ENCODE measurements at regions of chr9 and their contacts with region 1.

Region 1: GRCh38 chr9:93453047-93453914 is at the start of gene FAM120AOS:
- DNase-seq: peak; percentile 88
- CTCF ChIP-seq: no peak

Region 2: DNA sequence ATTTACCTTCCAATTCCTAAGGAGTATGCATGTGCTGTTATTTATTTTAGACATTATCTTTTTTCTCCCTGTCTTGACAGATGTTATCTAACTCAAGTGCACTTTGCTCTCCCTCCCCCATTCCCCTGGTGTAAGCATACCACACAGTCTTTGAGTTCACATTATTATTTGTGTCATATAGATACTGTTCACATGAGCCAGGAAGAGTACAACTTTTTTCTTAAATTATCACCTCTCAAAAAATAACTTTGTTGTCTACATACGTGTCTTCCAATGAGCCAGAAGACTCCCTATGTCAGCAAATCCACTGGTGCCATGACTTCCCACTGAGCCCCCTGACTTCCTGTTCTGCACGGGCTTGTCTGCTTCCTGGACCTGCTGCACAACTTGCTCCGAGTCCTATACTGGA is 21.7 kb before region 1 on chr9:
- CTCF ChIA-PET with region 1: no interaction called
- POLR2A ChIA-PET with region 1: no interaction called
- DNase-seq: no peak
- CTCF ChIP-seq: no peak

Region 3: DNA sequence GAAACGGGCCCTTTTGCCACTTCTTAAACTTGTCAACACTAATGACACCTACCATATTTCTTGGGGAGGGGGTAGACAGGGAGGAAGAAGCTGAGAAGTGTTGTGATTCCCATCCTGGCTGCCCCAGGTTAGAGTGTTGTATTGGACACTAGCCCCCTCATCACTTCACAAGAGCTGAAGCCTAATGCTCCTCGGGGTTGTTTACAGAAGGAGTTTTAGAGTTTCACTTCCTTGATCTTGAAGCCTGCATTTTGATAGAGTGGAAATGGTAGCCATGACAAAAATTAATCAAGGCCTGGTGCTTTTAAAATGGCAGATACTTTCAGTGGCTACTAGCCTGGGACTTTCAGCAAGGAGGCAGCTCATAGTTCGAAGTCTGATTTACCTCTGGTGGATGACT is 11.1 kb after region 1 on chr9:
- CTCF ChIA-PET with region 1: interaction called, 13 read pairs
- POLR2A ChIA-PET with region 1: interaction called, 4 read pairs
- DNase-seq: peak; percentile 23
- CTCF ChIP-seq: no peak

Measured in GM10248 (cell line).